ENCODE measurements at regions of chr1 and their contacts with region 1.

Region 1: DNA sequence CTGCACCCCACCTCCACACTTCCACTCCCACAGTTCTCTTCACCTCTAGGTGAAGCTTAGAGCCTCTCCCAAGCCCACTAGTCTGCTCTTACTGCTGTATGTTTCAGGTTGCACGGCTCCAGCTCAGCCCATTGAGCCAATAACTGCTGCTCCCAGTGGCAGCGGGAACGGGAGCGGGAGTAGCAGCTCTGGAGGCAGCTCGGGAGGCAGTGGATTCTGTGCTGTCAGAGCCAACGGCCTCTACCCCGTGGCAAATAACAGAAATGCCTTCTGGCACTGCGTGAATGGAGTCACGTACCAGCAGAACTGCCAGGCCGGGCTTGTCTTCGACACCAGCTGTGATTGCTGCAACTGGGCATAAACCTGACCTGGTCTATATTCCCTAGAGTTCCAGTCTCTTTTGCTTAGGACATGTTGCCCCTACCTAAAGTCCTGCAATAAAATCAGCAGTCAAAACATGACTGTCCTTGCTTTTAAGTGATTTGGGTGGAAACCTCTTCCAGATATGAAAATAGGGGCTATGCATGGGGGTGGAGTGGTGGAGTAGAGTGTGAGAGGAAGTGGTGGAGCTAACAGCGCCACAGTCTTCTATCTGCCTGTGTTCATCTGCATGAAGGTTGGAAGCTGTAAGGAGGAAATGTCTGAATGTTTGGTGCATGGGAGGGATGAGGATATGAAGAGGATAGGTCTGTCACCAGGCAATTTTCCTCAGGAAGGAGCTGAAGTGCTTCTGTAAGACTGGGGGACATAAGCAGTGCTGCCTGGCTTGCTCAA is 29.6 kb downstream of the CHIA start:
- DNase-seq: no peak
- ATAC-seq: no peak
- H3K4me3 ChIP-seq: no peak overlapping the region
- H3K27ac ChIP-seq: no peak overlapping the region
- H3K4me1 ChIP-seq: no peaks in the 10 kb centered on the region
- H3K27me3 ChIP-seq: peaks cover 0 to 7% (median 0%) of the 10 kb centered on the region in 7 donors
- CTCF ChIP-seq: no peak

Region 2: GRCh38 chr1:111183308-111184069 is 136.8 kb before region 1 on chr1:
- intact Hi-C with region 1: no loop called
- DNase-seq: no peak
- ATAC-seq: no peak
- H3K4me3 ChIP-seq: no peak overlapping the region
- H3K27ac ChIP-seq: no peak overlapping the region
- H3K4me1 ChIP-seq: peaks cover 0 to 32% (median 0%) of the 10 kb centered on the region in 9 donors
- H3K27me3 ChIP-seq: no peaks in the 10 kb centered on the region
- CTCF ChIP-seq: no peak

Region 3: GRCh38 chr1:111354584-111354983 is 34.3 kb after region 1 on chr1:
- intact Hi-C with region 1: loop called in 1 of 10 experiments (anchors 5 kb)
- DNase-seq: no peak
- ATAC-seq: no peak
- H3K4me3 ChIP-seq: no peak overlapping the region
- H3K27ac ChIP-seq: no peak overlapping the region
- H3K4me1 ChIP-seq: no peaks in the 10 kb centered on the region
- H3K27me3 ChIP-seq: no peaks in the 10 kb centered on the region
- CTCF ChIP-seq: no peak

Region 4: GRCh38 chr1:112237980-112238545 is 917.8 kb after region 1 on chr1:
- intact Hi-C with region 1: no loop called
- DNase-seq: no peak
- ATAC-seq: no peak
- H3K4me3 ChIP-seq: no peak overlapping the region
- H3K27ac ChIP-seq: no peak overlapping the region
- H3K4me1 ChIP-seq: no peaks in the 10 kb centered on the region
- H3K27me3 ChIP-seq: no peaks in the 10 kb centered on the region
- CTCF ChIP-seq: no peak